ENCODE measurements at regions of chr5 and their contacts with region 1.

Region 1: DNA sequence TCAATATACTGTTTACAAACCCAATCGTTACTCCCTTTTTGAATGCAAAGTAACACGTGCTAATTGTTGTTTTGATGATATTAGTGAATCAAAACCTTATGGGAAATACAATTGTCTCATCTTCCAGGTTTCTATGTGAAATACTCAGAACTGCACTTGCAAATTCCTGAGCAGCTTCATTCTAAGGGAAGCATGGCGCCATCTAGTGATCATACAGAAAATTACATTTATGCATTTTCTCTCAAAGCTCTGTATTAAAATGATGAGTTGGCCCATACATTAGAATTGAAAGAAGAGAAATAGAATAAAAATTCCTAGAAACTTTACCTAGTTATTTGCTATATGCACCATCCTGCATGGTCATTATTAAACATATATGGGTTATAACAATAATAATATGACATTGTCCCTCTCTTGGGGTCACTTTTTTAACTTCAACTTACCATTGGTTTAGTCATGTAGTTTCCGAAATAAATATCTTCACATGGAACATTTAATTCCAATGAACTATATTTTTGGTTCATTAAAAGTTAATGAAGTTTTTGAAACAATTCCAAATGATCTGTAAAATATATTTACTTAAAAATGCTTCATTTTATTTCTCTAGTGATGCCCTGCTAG is 220.0 kb downstream of the PDE4D start:
- DNase-seq: peak; percentile 67
- H3K4me3 Mint-ChIP-seq: no peak overlapping the region
- H3K27ac Mint-ChIP-seq: no peak overlapping the region
- H3K4me1 Mint-ChIP-seq: no peaks in the 10 kb centered on the region
- H3K27me3 Mint-ChIP-seq: peaks cover 22% of the 10 kb centered on the region

Region 2: DNA sequence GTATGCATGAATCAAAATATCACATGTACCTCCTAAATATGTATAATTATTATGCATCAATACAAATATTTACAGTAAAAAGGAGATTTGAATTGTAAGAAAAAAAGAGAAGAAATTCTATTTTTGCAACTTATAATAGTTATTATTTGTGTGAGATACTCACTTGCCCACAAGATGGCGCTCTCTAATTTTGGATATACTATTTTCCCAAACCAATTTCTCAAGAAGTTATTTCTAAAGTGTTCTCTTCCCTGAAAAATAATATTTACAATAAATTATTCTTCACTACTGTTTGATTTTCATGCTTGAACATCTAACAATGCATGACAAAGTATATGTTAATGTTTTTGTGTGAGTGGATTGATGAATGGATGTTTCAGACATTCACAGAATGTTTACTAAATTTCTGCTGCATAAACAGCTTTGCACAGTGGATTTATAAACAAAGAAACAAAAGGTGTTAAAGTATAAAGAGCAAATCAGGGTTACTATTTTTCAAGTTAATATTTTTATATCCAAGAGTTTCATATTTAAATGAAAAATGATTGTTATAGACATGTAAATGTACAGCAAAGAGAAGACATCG is 283.4 kb before region 1 on chr5:
- intact Hi-C with region 1: loop called (anchors 2 kb)
- DNase-seq: peak; percentile 65
- H3K4me3 Mint-ChIP-seq: no peak overlapping the region
- H3K27ac Mint-ChIP-seq: no peak overlapping the region
- H3K4me1 Mint-ChIP-seq: no peaks in the 10 kb centered on the region
- H3K27me3 Mint-ChIP-seq: peaks cover 16% of the 10 kb centered on the region

Region 3: DNA sequence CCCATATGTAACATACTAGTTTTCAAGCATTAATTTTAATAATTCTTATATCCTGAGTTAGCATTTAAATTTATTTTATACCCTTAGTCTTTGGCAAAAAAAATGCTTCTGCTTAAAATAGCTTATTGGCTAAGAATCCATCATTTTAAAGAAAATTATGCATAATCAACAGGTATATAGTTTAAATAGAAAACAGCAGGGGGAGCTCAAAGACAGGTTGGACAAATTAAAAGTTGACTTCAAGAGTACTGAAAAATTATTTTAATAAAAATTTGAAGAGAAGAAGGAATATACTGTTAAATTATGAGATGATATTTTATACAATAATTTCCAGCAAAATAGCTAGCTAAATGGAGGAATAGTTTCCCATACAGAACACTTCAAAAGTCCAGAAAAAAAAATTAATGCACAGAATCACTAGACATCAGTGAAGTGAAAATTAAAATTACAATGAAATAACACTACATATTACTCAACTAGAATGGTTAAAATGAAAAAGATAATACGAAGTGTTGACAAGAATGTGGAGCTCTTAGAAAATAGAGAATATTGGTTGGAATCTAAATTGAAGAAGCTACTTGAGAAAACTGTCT is 167.2 kb before region 1 on chr5:
- intact Hi-C with region 1: loop called (anchors 1 kb)
- DNase-seq: no peak
- H3K4me3 Mint-ChIP-seq: no peak overlapping the region
- H3K27ac Mint-ChIP-seq: no peak overlapping the region
- H3K4me1 Mint-ChIP-seq: no peaks in the 10 kb centered on the region
- H3K27me3 Mint-ChIP-seq: peaks cover 12% of the 10 kb centered on the region

Region 4: GRCh38 chr5:60102961-60103693 is 429.6 kb after region 1 on chr5:
- intact Hi-C with region 1: no loop called
- DNase-seq: no peak
- H3K4me3 Mint-ChIP-seq: no peak overlapping the region
- H3K27ac Mint-ChIP-seq: no peak overlapping the region
- H3K4me1 Mint-ChIP-seq: no peaks in the 10 kb centered on the region
- H3K27me3 Mint-ChIP-seq: no peaks in the 10 kb centered on the region